ENCODE measurements at regions of chr4 and their contacts with region 1.

Region 1: GRCh38 chr4:118801899-118802575 is 33.9 kb downstream of the SEC24D start:
- DNase-seq: no peak
- H3K4me3 ChIP-seq: no peak overlapping the region
- H3K4me3 Mint-ChIP-seq: no peak overlapping the region
- H3K27ac Mint-ChIP-seq: no peak overlapping the region
- H3K4me1 ChIP-seq: no peaks in the 10 kb centered on the region
- H3K4me1 Mint-ChIP-seq: no peaks in the 10 kb centered on the region
- H3K27me3 ChIP-seq: no peaks in the 10 kb centered on the region
- H3K27me3 Mint-ChIP-seq: no peaks in the 10 kb centered on the region
- CTCF ChIP-seq: no peak

Region 2: GRCh38 chr4:118718511-118719170 is 83.4 kb before region 1 on chr4:
- CTCF ChIA-PET with region 1: no interaction called
- POLR2A ChIA-PET with region 1: no interaction called
- intact Hi-C with region 1: loop called (anchors 2 kb)
- DNase-seq: no peak
- H3K4me3 ChIP-seq: no peak overlapping the region
- H3K4me3 Mint-ChIP-seq: no peak overlapping the region
- H3K27ac Mint-ChIP-seq: no peak overlapping the region
- H3K4me1 ChIP-seq: no peaks in the 10 kb centered on the region
- H3K4me1 Mint-ChIP-seq: peaks cover 6% of the 10 kb centered on the region
- H3K27me3 ChIP-seq: no peaks in the 10 kb centered on the region
- H3K27me3 Mint-ChIP-seq: no peaks in the 10 kb centered on the region
- CTCF ChIP-seq: no peak